Head of caudate nucleus (tissue), 42 donors: ENCODE measurements at regions of chr3 and their contacts with region 1.

Region 1: GRCh38 chr3:4633078-4634004 is 140.2 kb downstream of the ITPR1 start:
- DNase-seq: peak in 6 of 42 donors; percentile 23 to 60 (median 32)

Region 2: GRCh38 chr3:4350789-4351163 is 282.6 kb before region 1 on chr3:
- intact Hi-C with region 1: loop called (anchors 2 kb)
- DNase-seq: peak in 25 of 42 donors; percentile 10 to 82 (median 51)

Region 3: DNA sequence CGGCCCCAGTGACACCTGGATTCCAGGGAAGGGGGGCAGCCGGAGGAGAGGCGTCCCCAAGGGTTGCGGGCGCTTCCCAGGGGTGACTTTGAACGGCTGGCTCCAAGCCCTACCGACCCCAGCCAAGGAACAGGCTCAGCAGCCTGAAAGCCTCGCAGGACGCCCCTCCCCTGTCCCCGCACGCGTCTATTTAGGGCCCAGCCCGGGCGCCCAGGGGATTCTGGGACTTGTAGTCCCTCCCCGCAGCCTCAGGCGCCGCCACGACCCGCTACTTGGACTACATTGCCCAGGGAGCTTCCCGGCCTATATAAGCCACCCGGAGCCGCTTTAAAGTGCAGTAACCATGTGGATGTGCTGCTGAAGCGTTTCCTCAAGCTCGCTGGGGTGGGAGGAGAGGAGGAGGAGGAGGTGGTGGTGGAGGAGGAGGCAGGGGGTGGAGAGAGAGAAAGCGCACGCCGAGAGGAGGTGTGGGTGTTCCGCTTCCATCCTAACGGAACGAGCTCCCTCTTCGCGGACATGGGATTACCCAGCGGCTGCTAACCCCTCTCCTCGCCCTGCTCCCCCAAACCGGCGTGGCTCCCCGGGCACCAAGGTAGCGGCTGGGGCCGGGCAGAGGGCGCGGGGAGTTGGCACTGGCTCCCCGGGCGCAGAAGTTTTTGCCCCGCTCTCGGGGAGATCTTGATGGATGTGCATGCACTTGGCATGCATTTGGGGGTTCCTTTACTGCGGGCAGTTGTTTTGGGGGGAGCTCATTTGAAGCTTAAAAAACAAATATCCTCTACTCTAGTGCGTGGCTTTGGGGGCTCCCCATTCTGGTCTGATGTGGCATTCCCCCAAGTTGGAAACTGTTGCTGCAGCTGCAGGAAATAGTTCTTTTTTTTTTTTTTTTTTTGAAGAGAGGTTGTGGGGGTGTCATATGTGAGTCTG is 140.1 kb before region 1 on chr3 and contains the start of gene ITPR1:
- intact Hi-C with region 1: loop called (anchors 10 kb)
- DNase-seq: peak; percentile 92 to 99 (median 98)